HepG2 (cell line): ENCODE measurements at regions of chr6 and their contacts with region 1.

Region 1: GRCh38 chr6:27503436-27504030 is 30.6 kb upstream of the ZNF184 start:
- DNase-seq: peak; percentile 82
- ATAC-seq: peak; percentile 60
- H3K4me3 ChIP-seq: peak overlapping the region; percentile 78 to 87 (median 79)
- H3K27ac ChIP-seq: peak overlapping the region; percentile 37
- H3K4me1 ChIP-seq: peaks cover 46% of the 10 kb centered on the region
- H3K27me3 ChIP-seq: peaks cover 0 to 4% of the 10 kb centered on the region in 2 experiments; a peak in 2 of 5 replicates
- CTCF ChIP-seq: no peak
- EP300 ChIP-seq: no peak
- POLR2A ChIP-seq: no peak
- RAD21 ChIP-seq: no peak

Region 2: GRCh38 chr6:27177485-27178406 is 325.8 kb before region 1 on chr6:
- CTCF ChIA-PET with region 1: no interaction called
- POLR2A ChIA-PET with region 1: no interaction called
- in situ Hi-C with region 1: loop called (anchors 10 kb)
- intact Hi-C with region 1: no loop called
- DNase-seq: peak; percentile 65
- ATAC-seq: peak; percentile 91
- H3K4me3 ChIP-seq: peak overlapping the region; percentile 86 to 100 (median 97)
- H3K27ac ChIP-seq: peak overlapping the region; percentile 50
- H3K4me1 ChIP-seq: peaks cover 18% of the 10 kb centered on the region
- H3K27me3 ChIP-seq: peaks cover 0 to 12% of the 10 kb centered on the region in 2 experiments; a peak in 2 of 5 replicates
- CTCF ChIP-seq: peak; percentile 58
- EP300 ChIP-seq: no peak
- POLR2A ChIP-seq: no peak
- RAD21 ChIP-seq: peak; percentile 61

Region 3: GRCh38 chr6:27260369-27260768 is 243.2 kb before region 1 on chr6:
- CTCF ChIA-PET with region 1: no interaction called
- POLR2A ChIA-PET with region 1: no interaction called
- in situ Hi-C with region 1: no loop called
- intact Hi-C with region 1: no loop called
- DNase-seq: no peak
- ATAC-seq: no peak
- H3K4me3 ChIP-seq: no peak overlapping the region
- H3K27ac ChIP-seq: no peak overlapping the region
- H3K4me1 ChIP-seq: no peaks in the 10 kb centered on the region
- H3K27me3 ChIP-seq: peaks cover 0 to 18% of the 10 kb centered on the region in 2 experiments; a peak in 2 of 5 replicates
- CTCF ChIP-seq: no peak
- EP300 ChIP-seq: no peak
- POLR2A ChIP-seq: no peak
- RAD21 ChIP-seq: no peak

Region 4: GRCh38 chr6:27479319-27480182 is 24.0 kb before region 1 on chr6:
- CTCF ChIA-PET with region 1: no interaction called
- POLR2A ChIA-PET with region 1: interaction called, 3 read pairs
- in situ Hi-C with region 1: no loop called
- intact Hi-C with region 1: loop called (anchors 2 kb)
- DNase-seq: peak; percentile 85
- ATAC-seq: peak; percentile 82
- H3K4me3 ChIP-seq: peak overlapping the region; percentile 80 to 87 (median 81)
- H3K27ac ChIP-seq: peak overlapping the region; percentile 74
- H3K4me1 ChIP-seq: peaks cover 26% of the 10 kb centered on the region
- H3K27me3 ChIP-seq: no peaks in the 10 kb centered on the region; a peak in 1 of 5 replicates
- CTCF ChIP-seq: no peak
- EP300 ChIP-seq: peak in 1 of 2 experiments; percentile 32; a peak in 1 of 4 replicates
- POLR2A ChIP-seq: no peak; a peak in 2 of 4 replicates
- RAD21 ChIP-seq: peak; percentile 16; the same call in 1 of the 2 replicates

Region 5: DNA sequence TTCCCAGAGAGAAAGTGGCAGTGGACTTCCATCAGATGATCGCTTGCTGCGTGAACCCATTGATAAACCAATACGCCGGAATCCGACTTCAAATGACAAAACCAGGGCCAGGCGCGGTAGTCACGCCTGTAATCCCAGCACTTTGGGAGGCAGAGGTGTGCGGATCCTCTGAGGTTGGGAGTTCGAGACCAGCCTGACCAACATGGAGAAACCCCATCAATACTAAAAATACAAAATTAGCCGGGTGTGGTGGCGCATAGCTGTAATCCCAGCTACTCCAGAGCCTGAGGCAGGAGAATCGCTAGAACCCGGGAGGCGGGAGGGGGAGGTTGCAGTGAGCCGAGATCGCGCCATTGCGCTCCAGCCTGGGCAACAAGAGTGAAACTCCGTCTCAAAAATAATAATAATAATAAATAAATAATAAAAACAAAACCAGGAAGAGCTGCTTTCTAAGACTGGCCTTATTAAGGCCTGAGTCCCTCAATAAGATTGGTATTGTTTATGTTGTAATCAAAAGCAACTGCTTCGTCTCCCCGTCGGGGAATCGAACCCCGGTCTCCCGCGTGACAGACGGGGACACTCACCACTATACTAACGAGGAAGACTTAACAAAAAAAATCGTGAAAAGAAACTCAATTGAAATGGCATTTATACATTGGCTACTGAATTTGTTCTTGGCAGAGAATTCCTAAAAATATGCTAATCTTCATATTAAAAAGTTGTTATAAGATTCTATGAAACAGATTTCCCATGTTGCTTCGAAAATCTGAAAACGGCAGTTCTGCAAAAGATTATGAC is 79.6 kb after region 1 on chr6:
- CTCF ChIA-PET with region 1: no interaction called
- POLR2A ChIA-PET with region 1: no interaction called
- in situ Hi-C with region 1: no loop called
- intact Hi-C with region 1: no loop called
- DNase-seq: peak; percentile 65
- ATAC-seq: no peak
- H3K4me3 ChIP-seq: peak overlapping the region; percentile 23 to 45 (median 26); a peak in 4 of 6 replicates
- H3K27ac ChIP-seq: no peak overlapping the region
- H3K4me1 ChIP-seq: peaks cover 28% of the 10 kb centered on the region
- H3K27me3 ChIP-seq: no peaks in the 10 kb centered on the region
- CTCF ChIP-seq: no peak
- EP300 ChIP-seq: no peak
- POLR2A ChIP-seq: no peak
- RAD21 ChIP-seq: no peak

Region 6: DNA sequence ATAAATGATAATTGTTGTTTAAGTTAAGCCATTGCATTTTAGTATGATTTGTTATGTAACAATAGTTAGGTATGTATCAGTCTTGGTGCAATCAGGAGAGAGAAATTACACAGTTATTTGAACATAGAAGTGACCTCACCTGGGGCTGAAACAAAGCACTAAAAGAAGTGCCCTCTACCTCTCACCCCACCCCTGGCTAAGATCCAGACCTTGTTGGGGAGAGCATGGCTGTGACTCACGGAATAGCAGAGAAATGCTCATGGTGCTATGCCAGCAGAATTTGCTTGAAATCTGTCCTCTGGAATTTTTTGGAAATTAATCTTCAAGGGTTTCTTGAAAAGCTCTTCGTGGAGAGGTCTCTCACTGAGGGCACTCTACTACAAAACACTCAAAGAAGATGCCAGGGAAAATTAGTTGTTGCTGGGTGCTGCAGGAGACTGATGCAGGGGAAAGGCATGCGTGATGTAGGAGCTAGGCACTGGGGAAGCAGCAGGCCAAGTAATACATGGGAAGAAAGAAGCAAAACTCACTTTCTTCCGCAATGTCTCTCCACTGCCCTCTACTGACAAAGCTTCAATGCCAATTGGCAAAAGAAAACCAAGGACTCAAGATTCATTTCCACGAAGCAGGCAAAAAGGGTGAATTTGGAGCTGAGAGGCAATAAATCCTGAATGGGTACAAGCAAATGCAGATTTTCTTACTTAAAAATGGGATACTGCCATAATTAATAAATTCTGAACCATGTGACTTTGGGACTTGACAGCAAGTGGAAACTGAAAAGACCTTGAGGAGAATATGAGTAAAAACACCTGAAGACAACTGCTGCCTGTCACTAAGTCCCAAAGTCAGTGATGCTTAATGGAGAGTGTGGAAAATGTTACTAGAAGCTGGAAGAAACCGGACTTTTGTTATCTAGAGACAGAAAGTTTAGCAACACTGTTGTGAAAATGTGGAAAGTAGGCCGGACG is 105.7 kb after region 1 on chr6:
- CTCF ChIA-PET with region 1: no interaction called
- POLR2A ChIA-PET with region 1: no interaction called
- in situ Hi-C with region 1: loop called (anchors 25 kb)
- intact Hi-C with region 1: loop called (anchors 5 kb)
- DNase-seq: peak; percentile 61
- ATAC-seq: peak; percentile 31; the same call in 2 of the 3 replicates
- H3K4me3 ChIP-seq: no peak overlapping the region
- H3K27ac ChIP-seq: no peak overlapping the region
- H3K4me1 ChIP-seq: peaks cover 31% of the 10 kb centered on the region
- H3K27me3 ChIP-seq: no peaks in the 10 kb centered on the region
- CTCF ChIP-seq: peak; percentile 85
- EP300 ChIP-seq: no peak
- POLR2A ChIP-seq: no peak
- RAD21 ChIP-seq: peak; percentile 47; the same call in 1 of the 2 replicates